Pancreas (tissue), 10 donors: ENCODE measurements at regions of chr1 and their contacts with region 1.

Region 1: DNA sequence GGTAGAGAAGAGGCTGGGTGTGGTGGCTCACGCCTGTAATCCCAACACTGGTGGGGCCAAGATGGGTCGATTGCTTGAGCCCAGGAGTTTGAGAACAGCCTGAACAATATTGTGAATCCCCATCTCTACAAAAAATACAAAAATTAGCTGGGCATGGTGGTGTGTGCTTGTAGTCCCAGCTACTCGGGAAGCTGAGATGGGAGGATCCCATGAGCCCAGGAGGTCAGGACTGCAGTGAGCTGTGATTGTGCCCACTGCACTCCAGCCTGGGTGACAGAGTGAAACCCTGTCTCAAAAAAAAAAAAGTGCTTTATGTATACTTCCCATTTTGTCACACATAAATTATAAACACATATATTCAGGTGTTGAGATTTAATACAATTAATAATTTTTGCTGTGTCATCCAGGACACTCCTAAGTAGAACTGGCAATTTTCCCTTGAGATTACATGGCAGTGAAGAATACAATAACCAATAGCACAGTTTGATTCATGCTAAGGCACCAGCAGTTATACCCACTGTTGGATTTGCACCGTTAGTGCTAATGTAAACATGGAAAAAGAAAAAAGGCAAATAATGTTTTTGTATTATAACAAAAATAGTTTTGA is 15.5 kb downstream of the GABPB2 start:
- DNase-seq: no peak
- ATAC-seq: no peak
- H3K4me3 ChIP-seq: no peak overlapping the region
- H3K27ac ChIP-seq: no peak overlapping the region
- H3K4me1 ChIP-seq: no peaks in the 10 kb centered on the region
- H3K27me3 ChIP-seq: no peaks in the 10 kb centered on the region
- CTCF ChIP-seq: no peak

Region 2: DNA sequence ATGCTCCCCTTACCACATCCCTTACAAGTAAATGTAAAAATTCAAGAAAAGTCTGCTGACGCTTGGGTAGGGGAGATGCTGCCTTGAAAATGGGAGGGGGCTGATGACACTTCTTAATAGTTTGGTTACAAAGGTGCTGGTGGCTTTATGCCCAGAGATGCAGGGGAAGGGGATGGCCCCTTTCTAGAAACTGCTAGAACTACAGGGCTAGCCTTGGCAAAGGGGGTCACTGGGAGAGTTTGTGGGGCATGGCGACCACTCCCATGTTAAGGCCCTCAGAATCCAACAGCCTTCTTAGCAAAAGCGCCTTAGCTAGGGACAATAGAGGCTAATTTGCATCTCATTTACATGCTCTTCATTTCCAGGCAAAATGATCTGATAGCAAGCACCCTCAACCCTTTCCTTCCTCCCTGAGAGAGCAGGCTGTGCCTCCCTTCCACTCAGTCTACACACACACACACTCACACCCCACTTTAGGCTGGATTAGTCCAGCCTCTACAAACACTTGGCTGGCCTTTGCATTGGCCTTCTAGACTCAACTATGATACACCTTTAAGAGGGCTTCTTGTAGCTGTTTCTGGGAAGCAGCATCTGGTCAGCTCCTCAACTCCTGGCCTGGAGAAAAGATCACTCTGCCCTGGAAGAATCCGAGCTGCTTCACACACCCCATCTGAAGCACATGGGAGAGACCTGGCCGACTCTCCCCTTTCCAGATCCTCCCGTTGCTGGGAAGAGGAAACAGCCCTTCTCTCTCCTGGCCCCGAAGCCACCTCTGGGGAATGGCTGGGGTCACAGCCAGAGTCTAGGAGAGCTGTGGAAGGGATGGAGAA is 58.6 kb after region 1 on chr1:
- intact Hi-C with region 1: loop called in 1 of 3 experiments (anchors 5 kb)
- DNase-seq: no peak
- ATAC-seq: no peak
- H3K4me3 ChIP-seq: peak overlapping the region in 1 of 4 donors; percentile 88
- H3K27ac ChIP-seq: no peak overlapping the region
- H3K4me1 ChIP-seq: peaks cover 0 to 6% (median 0%) of the 10 kb centered on the region in 3 donors
- H3K27me3 ChIP-seq: no peaks in the 10 kb centered on the region
- CTCF ChIP-seq: no peak